AG04449 (cell line): ENCODE measurements at regions of chr2 and their contacts with region 1.

Region 1: GRCh38 chr2:69717861-69718273 is 24.1 kb upstream of the ANXA4 start:
- DNase-seq: no peak
- H3K4me3 ChIP-seq: no peak overlapping the region
- CTCF ChIP-seq: no peak

Region 2: DNA sequence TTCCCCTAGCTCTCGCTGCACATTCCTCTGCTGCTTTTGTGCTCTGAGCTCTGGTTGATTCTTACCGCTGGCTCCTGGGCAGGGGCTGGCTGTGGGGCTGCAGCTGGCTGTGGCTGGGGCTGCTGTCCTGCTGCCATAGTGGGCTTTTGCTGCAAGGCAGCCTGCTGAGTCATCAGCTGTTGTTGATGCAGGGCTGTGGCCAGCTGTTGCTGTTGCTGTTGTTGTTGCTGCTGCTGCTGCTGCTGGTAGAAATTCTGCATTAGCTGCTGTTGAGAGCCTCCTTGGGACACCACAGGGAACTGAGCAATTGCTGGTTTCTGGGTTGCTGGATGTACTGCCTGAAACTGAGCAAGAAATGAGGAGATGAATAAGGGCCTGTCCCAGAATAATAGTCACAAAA is 203.5 kb before region 1 on chr2:
- CTCF ChIA-PET with region 1: interaction called, 12 read pairs
- POLR2A ChIA-PET with region 1: no interaction called
- DNase-seq: peak; percentile 37
- H3K4me3 ChIP-seq: no peak overlapping the region
- CTCF ChIP-seq: peak; percentile 16

Region 3: GRCh38 chr2:69694894-69695849 is 22.7 kb before region 1 on chr2:
- CTCF ChIA-PET with region 1: interaction called, 24 read pairs
- POLR2A ChIA-PET with region 1: no interaction called
- DNase-seq: peak; percentile 88
- H3K4me3 ChIP-seq: no peak overlapping the region
- CTCF ChIP-seq: no peak